ENCODE measurements at regions of chr1 and their contacts with region 1.

Region 1: GRCh38 chr1:30743584-30744059 is 14.0 kb downstream of the LAPTM5 start:
- DNase-seq: peak; percentile 89
- ATAC-seq: peak; percentile 77
- H3K4me3 Mint-ChIP-seq: peak overlapping the region; percentile 65
- H3K27ac Mint-ChIP-seq: peak overlapping the region; percentile 89
- H3K4me1 Mint-ChIP-seq: peaks cover 98% of the 10 kb centered on the region
- H3K27me3 Mint-ChIP-seq: no peaks in the 10 kb centered on the region

Region 2: GRCh38 chr1:30684881-30685795 is 58.5 kb before region 1 on chr1:
- CTCF ChIA-PET with region 1: no interaction called
- POLR2A ChIA-PET with region 1: no interaction called
- DNase-seq: no peak
- ATAC-seq: no peak
- H3K4me3 Mint-ChIP-seq: no peak overlapping the region
- H3K27ac Mint-ChIP-seq: no peak overlapping the region
- H3K4me1 Mint-ChIP-seq: no peaks in the 10 kb centered on the region
- H3K27me3 Mint-ChIP-seq: peaks cover 46% of the 10 kb centered on the region

Region 3: GRCh38 chr1:30732277-30732996 is 11.2 kb before region 1 on chr1:
- CTCF ChIA-PET with region 1: interaction called, 24 read pairs
- POLR2A ChIA-PET with region 1: interaction called, 12 read pairs
- DNase-seq: no peak
- ATAC-seq: no peak
- H3K4me3 Mint-ChIP-seq: no peak overlapping the region
- H3K27ac Mint-ChIP-seq: peak overlapping the region; percentile 58
- H3K4me1 Mint-ChIP-seq: peaks cover 31% of the 10 kb centered on the region
- H3K27me3 Mint-ChIP-seq: no peaks in the 10 kb centered on the region

Region 4: DNA sequence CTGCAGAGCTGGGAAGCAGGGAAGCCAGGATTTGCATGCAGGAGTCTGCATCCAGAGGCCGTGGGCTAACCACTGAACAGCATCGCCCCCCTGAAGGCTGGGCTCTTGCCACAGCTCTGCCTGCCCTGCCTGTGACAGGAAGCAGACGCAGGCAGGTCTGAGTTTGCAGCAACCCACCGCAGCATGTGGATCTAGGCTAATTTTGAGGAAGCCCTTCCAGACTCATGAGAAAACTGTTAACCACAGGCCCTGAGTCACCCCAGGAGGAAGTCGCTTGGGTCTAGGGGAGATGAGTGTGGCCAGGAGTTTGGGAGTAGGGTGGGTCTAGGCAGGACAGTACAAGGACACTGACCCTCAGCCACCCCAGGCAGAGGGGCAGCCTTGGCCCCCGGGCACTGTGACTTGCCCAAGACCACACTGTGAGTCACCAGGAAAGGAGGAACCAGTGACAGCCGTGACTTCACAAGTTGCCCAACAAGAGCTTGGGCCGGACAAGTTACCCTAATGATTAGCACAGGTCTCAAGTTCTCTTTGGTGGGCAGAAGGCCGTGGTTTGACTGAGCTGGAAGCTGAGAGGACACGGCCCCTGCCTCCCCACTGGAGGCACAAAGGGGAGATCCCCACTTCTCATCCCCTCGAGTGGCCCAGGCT is 13.0 kb after region 1 on chr1:
- CTCF ChIA-PET with region 1: interaction called, 103 read pairs
- POLR2A ChIA-PET with region 1: interaction called, 290 read pairs
- DNase-seq: peak; percentile 84
- ATAC-seq: peak; percentile 56
- H3K4me3 Mint-ChIP-seq: peak overlapping the region; percentile 96
- H3K27ac Mint-ChIP-seq: peak overlapping the region; percentile 96
- H3K4me1 Mint-ChIP-seq: peaks cover 81% of the 10 kb centered on the region
- H3K27me3 Mint-ChIP-seq: no peaks in the 10 kb centered on the region

Region 5: DNA sequence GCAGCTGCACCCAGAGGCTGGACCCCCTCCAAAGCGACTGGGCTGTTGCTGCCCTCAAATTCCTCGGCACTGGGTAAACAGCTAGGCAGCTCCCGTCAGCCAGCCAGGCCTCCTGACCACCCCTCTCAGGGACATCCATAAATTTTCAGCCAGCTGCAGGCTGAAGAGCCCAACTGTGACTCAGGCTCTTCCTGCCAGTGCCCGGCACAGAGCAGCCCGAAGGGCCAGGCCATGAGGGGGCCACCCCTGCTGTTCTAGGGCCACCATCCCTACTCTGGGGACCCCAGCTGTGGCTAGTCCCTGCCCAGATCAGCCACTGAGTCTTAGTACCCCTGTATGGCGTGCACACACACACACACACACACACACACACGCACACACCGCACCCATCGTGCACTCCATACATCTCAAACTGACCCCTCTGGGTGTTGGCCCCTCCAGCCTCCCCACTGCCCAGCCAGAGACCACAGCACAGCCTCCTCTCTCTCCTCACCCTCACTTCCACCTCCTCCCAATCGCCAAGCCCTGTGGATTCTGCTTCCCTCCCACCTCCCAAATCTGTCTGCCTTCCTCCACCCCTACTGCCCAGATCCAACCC is 20.1 kb after region 1 on chr1:
- CTCF ChIA-PET with region 1: interaction called, 103 read pairs
- POLR2A ChIA-PET with region 1: interaction called, 290 read pairs
- DNase-seq: no peak
- ATAC-seq: no peak
- H3K4me3 Mint-ChIP-seq: no peak overlapping the region
- H3K27ac Mint-ChIP-seq: peak overlapping the region; percentile 39
- H3K4me1 Mint-ChIP-seq: peaks cover 88% of the 10 kb centered on the region
- H3K27me3 Mint-ChIP-seq: no peaks in the 10 kb centered on the region

Region 6: DNA sequence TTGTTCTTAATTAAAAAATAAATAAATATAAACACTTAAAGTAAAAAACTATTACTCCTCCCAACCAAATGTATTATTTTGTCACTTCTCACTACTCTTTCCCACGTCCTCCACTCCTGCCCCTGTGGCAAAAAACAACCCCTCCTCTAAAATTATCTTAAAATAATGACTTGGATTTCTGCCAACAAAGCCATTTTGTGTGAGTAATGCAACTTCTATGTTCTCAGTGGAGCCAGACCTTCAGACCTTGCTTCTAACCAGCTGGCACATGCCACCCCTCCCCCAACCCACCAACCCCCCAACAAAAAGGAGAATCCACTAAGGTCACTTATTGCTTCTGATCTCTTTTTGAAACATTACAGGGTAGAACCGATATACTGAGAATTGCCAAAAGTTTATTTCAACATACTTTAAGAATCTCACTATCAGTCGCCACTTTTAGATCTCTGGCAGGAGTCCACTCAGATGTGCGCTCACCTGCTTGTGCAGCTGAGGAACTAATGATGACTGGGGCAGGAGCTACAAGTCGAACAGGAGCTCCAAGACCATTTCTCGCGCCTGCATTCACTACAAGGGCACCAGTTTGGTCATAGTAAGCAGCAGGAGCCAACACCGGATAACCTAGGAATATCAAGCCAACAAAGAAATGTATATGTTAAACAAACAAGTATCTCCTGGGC is 223.2 kb after region 1 on chr1:
- CTCF ChIA-PET with region 1: no interaction called
- POLR2A ChIA-PET with region 1: no interaction called
- DNase-seq: no peak
- ATAC-seq: no peak
- H3K4me3 Mint-ChIP-seq: no peak overlapping the region
- H3K27ac Mint-ChIP-seq: no peak overlapping the region
- H3K4me1 Mint-ChIP-seq: peaks cover 16% of the 10 kb centered on the region
- H3K27me3 Mint-ChIP-seq: no peaks in the 10 kb centered on the region

Measured in activated CD8-positive, alpha-beta T cell treated with anti-CD3 and anti-CD28 coated beads, Interleukin-2, amount 10 ng/mL, durations not matched to agents 7 days and 5 days (primary cell).